PC-3 (cell line): ENCODE measurements at regions of chr1 and their contacts with region 1.

Region 1: GRCh38 chr1:27603681-27604578 is at the start of gene AHDC1:
- DNase-seq: peak; percentile 90
- ATAC-seq: peak; percentile 57
- H3K4me3 ChIP-seq: peak within 1 kb of the TSS; percentile 88
- H3K27ac ChIP-seq: peak within 1 kb of the TSS; percentile 46
- H3K4me1 ChIP-seq: peaks cover 39% of the 10 kb centered on the region
- H3K27me3 ChIP-seq: no peaks in the 10 kb centered on the region
- CTCF ChIP-seq: no peak
- total RNA-seq, gene AHDC1: 15.2 and 20.4 TPM in 2 replicates

Region 2: GRCh38 chr1:27300341-27301051 is 303.4 kb before region 1 on chr1:
- CTCF ChIA-PET with region 1: interaction called, 7 read pairs
- POLR2A ChIA-PET with region 1: no interaction called
- intact Hi-C with region 1: loop called (anchors 10 kb)
- DNase-seq: peak; percentile 90
- ATAC-seq: peak; percentile 62
- H3K4me3 ChIP-seq: no peak overlapping the region
- H3K27ac ChIP-seq: peak overlapping the region; percentile 85
- H3K4me1 ChIP-seq: peaks cover 21% of the 10 kb centered on the region
- H3K27me3 ChIP-seq: no peaks in the 10 kb centered on the region
- CTCF ChIP-seq: peak; percentile 92

Region 3: DNA sequence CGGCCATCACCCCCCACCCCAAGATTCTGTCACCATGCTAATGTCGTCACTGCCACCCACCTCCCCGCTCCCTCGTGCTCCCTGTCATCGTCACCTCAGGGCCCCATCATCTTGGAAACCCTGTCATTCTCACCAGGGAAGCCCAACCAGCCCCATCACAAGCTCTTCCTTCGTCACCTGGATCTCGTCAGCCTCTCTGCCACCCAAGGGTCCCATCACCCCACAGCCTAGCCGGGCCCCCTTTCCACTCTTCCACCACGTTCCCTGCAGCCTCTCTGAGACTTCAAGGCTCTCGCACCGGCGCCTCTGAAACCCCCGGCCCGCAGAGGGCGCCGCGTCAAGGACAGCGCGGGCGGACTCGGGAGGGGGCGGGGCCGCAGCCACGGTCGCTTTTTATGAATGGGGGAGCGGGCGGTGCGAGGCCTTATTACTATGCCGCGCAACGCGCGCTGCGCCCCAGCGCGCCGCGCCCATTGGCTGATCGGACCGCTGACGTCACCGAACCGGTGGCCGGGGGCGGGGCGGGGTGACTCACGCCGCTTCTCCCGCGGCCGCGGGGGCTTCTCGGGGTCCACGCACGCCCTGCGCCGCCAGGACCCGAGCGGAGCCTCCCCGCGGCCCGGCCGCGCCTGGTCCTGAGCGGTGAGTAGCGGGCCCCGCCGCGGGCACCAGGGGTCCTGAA is 211.7 kb before region 1 on chr1 and contains the start of gene GPR3:
- CTCF ChIA-PET with region 1: interaction called, 5 read pairs
- POLR2A ChIA-PET with region 1: no interaction called
- intact Hi-C with region 1: loop called (anchors 1 kb)
- DNase-seq: peak; percentile 94
- ATAC-seq: peak; percentile 82
- H3K4me3 ChIP-seq: peak within 1 kb of the TSS; percentile 100
- H3K27ac ChIP-seq: peak within 1 kb of the TSS; percentile 64
- H3K4me1 ChIP-seq: peaks cover 25% of the 10 kb centered on the region
- H3K27me3 ChIP-seq: no peaks in the 10 kb centered on the region
- CTCF ChIP-seq: peak; percentile 65
- total RNA-seq, gene GPR3: 4.7 TPM in 2 replicates

Region 4: GRCh38 chr1:27416387-27417111 is 187.4 kb before region 1 on chr1:
- CTCF ChIA-PET with region 1: no interaction called
- POLR2A ChIA-PET with region 1: interaction called, 13 read pairs
- intact Hi-C with region 1: loop called (anchors 5 kb)
- DNase-seq: peak; percentile 70
- ATAC-seq: peak; percentile 54
- H3K4me3 ChIP-seq: no peak overlapping the region
- H3K27ac ChIP-seq: no peak overlapping the region
- H3K4me1 ChIP-seq: peaks cover 17% of the 10 kb centered on the region
- H3K27me3 ChIP-seq: no peaks in the 10 kb centered on the region
- CTCF ChIP-seq: peak; percentile 87

Region 5: DNA sequence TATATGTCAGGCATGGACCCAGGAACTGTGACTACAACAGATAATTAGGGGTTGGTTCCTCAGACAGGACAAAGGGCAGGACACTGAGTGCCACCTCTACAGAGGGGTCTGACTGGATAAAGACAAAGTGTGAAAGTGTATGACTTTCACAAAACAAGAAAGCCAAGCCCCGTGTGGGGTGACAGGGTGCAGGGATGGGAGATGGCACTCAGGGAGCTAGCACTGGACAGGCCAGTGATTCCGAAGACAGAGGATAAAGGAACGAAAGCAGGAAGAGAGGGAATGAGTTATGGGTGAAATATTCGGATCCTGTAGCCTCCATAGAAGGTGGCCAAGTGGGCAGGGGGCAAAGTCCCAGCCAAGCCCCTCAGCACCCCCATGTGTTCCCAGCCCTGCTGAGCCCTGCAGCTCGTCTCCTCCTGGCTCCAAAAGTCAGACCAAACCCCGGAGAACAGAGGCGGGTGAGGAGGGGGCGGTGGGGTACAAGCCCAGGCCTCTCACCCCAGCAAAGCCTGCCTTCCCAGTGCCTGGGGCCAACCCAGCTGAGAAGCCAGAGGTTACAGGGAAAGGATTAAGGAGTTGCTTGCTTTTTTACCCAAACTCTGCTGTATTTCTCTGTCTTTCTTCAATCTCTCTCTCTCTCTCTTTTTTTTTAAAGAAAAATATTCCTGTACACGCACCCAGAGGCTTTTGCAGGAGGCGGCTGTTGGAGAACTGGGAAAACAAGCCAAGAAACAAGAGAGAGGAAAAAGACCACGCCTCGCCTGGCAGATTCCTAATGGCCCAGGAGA is 99.9 kb before region 1 on chr1:
- CTCF ChIA-PET with region 1: no interaction called
- POLR2A ChIA-PET with region 1: interaction called, 19 read pairs
- intact Hi-C with region 1: no loop called
- DNase-seq: no peak
- ATAC-seq: no peak
- H3K4me3 ChIP-seq: no peak overlapping the region
- H3K27ac ChIP-seq: no peak overlapping the region
- H3K4me1 ChIP-seq: no peaks in the 10 kb centered on the region
- H3K27me3 ChIP-seq: no peaks in the 10 kb centered on the region
- CTCF ChIP-seq: no peak

Region 6: DNA sequence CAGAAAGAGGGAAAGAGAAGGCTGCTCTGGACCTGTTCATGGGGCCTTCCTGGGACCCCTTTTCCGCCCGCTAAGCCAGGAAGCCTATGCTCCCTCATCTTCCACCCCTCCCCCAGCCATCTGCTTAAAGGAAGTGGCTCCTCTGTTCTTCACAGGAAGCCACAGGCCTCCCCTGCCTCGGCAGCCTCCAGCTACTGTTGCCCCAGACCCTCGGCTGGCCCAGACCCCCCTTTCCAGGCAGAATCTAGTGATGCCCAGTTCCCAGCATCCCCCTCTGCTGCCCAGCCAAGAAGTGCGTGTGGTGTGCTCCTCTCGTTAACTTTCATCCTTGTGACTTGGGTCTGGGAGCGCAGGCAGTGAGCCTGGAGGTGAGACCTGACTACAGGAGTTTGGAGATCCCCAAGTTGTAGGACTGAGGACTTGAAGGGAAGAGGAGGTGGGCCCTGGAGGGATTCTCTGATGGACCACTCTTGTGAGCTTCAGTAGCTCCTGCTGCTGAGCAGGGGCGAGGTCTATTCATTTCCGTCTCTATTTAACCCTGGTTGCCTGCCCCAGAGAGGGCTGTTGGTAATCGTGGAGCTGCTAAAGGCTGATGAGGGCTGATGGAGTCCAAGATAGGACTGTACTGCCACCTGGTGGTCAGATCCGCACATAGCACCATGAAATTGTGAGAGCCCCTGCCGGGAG is 58.9 kb after region 1 on chr1:
- CTCF ChIA-PET with region 1: interaction called, 3 read pairs
- POLR2A ChIA-PET with region 1: no interaction called
- intact Hi-C with region 1: loop called (anchors 1 kb)
- DNase-seq: peak; percentile 93
- ATAC-seq: peak; percentile 69
- H3K4me3 ChIP-seq: no peak overlapping the region
- H3K27ac ChIP-seq: no peak overlapping the region
- H3K4me1 ChIP-seq: peaks cover 17% of the 10 kb centered on the region
- H3K27me3 ChIP-seq: no peaks in the 10 kb centered on the region
- CTCF ChIP-seq: peak; percentile 89

Region 7: GRCh38 chr1:27719286-27720251 is 115.6 kb after region 1 on chr1:
- CTCF ChIA-PET with region 1: no interaction called
- POLR2A ChIA-PET with region 1: no interaction called
- intact Hi-C with region 1: no loop called
- DNase-seq: peak; percentile 20
- ATAC-seq: peak; percentile 58
- H3K4me3 ChIP-seq: no peak overlapping the region
- H3K27ac ChIP-seq: no peak overlapping the region
- H3K4me1 ChIP-seq: no peaks in the 10 kb centered on the region
- H3K27me3 ChIP-seq: no peaks in the 10 kb centered on the region
- CTCF ChIP-seq: peak; percentile 54